ENCODE measurements at regions of chr16 and their contacts with region 1.

Region 1: DNA sequence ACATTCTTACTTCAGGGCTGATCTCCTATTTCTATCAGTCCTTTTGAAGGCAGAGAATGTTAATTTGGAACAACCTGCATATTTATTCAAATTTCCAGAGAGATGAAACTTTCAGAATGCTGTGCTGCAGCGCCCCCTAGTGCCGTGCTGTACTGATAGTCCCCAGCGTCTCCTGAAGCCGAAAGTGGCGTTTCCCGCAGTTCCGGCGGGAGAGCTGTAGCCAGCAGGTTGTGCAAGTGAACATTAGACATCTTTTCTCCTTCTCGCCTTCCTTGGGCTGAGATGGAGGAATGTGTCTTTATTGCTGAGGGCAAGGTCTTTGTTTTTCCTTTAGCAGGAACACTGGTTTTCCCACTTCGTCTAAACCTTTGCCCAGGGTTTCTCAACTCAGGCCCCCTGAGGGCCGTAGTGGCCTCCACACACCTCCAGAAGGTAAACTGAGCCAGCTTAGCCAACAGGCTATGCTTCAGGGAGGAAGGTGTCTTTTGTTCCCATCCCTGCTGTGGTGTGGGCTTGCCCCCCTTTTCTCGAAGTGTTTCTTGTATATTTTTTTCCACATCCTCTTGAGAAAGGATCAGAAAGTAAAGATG is 26.4 kb downstream of the USP10 start:
- DNase-seq: peak; percentile 90
- H3K4me3 ChIP-seq: no peak overlapping the region
- H3K27ac ChIP-seq: peak overlapping the region; percentile 34
- H3K4me1 ChIP-seq: peaks cover 85% of the 10 kb centered on the region
- H3K27me3 ChIP-seq: no peaks in the 10 kb centered on the region
- CTCF ChIP-seq: peak; percentile 98

Region 2: GRCh38 chr16:84511180-84511824 is 214.9 kb before region 1 on chr16:
- CTCF ChIA-PET with region 1: interaction called, 7 read pairs
- POLR2A ChIA-PET with region 1: no interaction called
- intact Hi-C with region 1: loop called (anchors 2 kb)
- DNase-seq: peak; percentile 88
- H3K4me3 ChIP-seq: no peak overlapping the region
- H3K27ac ChIP-seq: no peak overlapping the region
- H3K4me1 ChIP-seq: no peaks in the 10 kb centered on the region
- H3K27me3 ChIP-seq: no peaks in the 10 kb centered on the region
- CTCF ChIP-seq: peak; percentile 97

Region 3: DNA sequence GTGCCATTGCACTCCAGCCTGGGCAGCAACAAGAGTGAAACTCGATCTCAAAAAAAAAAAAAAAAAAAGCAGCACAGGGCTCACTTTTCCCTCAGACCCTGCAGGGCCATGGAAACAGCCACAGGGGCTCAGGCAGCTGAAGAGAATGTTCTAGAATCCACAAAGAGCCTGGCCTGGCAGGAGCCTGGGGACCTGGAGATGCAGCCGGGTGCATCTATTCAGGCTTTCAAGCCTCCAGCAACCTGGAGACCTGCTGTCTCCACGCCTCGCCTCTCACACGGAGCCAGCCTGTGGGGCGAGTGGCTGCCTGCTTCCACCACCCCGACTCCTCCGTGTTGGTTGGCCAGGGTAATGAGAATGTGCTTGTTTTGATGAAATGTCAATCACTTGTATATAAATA is 177.7 kb before region 1 on chr16:
- CTCF ChIA-PET with region 1: interaction called, 11 read pairs
- POLR2A ChIA-PET with region 1: no interaction called
- intact Hi-C with region 1: no loop called
- DNase-seq: no peak
- H3K4me3 ChIP-seq: no peak overlapping the region
- H3K27ac ChIP-seq: no peak overlapping the region
- H3K4me1 ChIP-seq: peaks cover 3% of the 10 kb centered on the region
- H3K27me3 ChIP-seq: no peaks in the 10 kb centered on the region
- CTCF ChIP-seq: no peak

Region 4: GRCh38 chr16:84617791-84618580 is 108.2 kb before region 1 on chr16 and contains the start of gene COTL1:
- CTCF ChIA-PET with region 1: interaction called, 7 read pairs
- POLR2A ChIA-PET with region 1: no interaction called
- intact Hi-C with region 1: loop called (anchors 2 kb)
- DNase-seq: peak; percentile 98
- H3K4me3 ChIP-seq: peak within 1 kb of the TSS; percentile 68
- H3K27ac ChIP-seq: no peak within 1 kb of the TSS
- H3K4me1 ChIP-seq: peaks cover 25% of the 10 kb centered on the region
- H3K27me3 ChIP-seq: no peaks in the 10 kb centered on the region
- CTCF ChIP-seq: no peak
- total RNA-seq, gene COTL1: 34.1 and 35.9 TPM in 2 replicates

Region 5: GRCh38 chr16:84672276-84673202 is 53.6 kb before region 1 on chr16:
- CTCF ChIA-PET with region 1: interaction called, 21 read pairs
- POLR2A ChIA-PET with region 1: no interaction called
- intact Hi-C with region 1: loop called (anchors 2 kb)
- DNase-seq: peak; percentile 77
- H3K4me3 ChIP-seq: no peak overlapping the region
- H3K27ac ChIP-seq: no peak overlapping the region
- H3K4me1 ChIP-seq: peaks cover 5% of the 10 kb centered on the region
- H3K27me3 ChIP-seq: no peaks in the 10 kb centered on the region
- CTCF ChIP-seq: peak; percentile 92

Measured in A673 (cell line).